GM12878 (cell line): ENCODE measurements at regions of chr16 and their contacts with region 1.

Region 1: GRCh38 chr16:50065624-50066481 is at the start of gene HEATR3:
- DNase-seq: peak; percentile 82
- ATAC-seq: peak; percentile 93
- H3K4me3 ChIP-seq: peak within 1 kb of the TSS; percentile 99
- H3K27ac ChIP-seq: peak within 1 kb of the TSS; percentile 86
- H3K4me1 ChIP-seq: peaks cover 15% of the 10 kb centered on the region
- H3K27me3 ChIP-seq: no peaks in the 10 kb centered on the region
- CTCF ChIP-seq: no peak
- EP300 ChIP-seq: no peak
- POLR2A ChIP-seq: peak; percentile 89
- RAD21 ChIP-seq: no peak
- polyA plus RNA-seq, gene HEATR3: 1.5 to 5.0 TPM

Region 2: DNA sequence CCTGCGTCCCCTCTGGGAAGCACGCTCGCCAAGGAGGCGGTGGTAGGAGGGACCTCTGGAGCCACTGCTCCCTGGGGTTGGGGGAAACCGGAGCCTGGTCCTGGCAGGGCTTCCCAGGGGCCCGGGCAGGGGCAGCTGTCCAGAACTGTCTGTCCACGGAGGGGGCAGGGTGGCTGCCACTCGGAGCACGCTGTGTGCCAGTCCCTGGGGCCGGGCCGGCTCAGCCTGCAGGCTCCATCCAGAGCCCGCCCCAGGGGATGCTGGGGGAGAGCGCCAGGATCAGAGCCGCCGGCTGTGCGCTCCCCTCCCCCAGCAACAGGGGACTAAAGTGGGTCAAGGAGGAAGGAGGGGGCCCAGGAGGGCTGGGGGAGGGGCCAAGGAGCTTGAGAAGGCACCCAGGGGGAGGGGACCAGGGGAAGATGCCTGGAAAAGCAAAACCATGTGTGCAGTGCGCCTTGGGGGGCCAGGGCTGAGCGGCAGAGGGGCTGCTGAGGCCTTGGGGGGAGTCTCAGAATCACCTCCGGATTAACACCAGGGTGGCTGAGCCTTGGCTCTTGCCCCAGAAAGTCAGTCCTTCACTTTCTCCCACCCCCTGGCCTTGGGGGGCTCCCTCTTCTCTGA is 231.2 kb before region 1 on chr16:
- CTCF ChIA-PET with region 1: no interaction called
- POLR2A ChIA-PET with region 1: no interaction called
- RAD21 ChIA-PET with region 1: no interaction called
- SMC1A ChIA-PET with region 1: no interaction called
- in situ Hi-C with region 1: no loop called
- intact Hi-C with region 1: no loop called
- DNase-seq: no peak
- ATAC-seq: no peak
- H3K4me3 ChIP-seq: no peak overlapping the region
- H3K27ac ChIP-seq: no peak overlapping the region
- H3K4me1 ChIP-seq: no peaks in the 10 kb centered on the region
- H3K27me3 ChIP-seq: peaks cover 9 to 16% of the 10 kb centered on the region in 2 experiments
- CTCF ChIP-seq: no peak
- EP300 ChIP-seq: no peak
- POLR2A ChIP-seq: no peak
- RAD21 ChIP-seq: no peak

Region 3: DNA sequence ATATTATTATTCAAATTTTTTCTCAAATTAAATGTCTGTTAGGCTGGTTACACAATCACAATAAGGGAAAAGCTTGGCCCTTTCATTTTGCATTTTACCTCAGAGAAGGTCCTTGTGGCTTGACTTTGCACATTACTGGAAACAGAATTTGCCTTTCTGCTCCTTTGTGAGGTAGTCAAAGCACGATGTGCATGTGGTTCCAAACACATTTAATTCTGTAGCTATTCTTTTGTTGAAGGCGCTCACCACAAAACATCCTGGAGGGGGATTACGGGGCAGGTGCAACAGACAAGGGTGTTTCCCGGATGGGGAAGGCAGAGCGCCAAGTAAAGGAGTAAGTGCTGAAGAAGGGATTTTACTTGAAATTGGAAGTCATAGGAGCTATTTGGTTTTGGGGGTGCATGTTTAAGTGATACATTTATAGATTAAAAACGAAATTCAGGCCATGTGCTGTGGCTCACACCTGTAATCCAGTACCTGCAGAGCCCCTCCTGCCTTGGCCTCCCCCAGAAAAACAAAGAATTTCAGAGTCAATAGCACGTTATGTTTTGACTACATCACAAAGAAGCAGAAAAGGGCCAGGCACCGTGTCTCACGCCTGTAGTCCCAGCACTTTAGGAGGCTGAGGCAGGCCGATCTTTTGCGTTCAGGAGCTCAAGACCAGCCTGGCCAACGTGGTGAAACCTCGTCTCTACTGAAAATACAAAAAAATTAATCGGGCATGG is 56.0 kb after region 1 on chr16:
- CTCF ChIA-PET with region 1: interaction called, 22 read pairs
- POLR2A ChIA-PET with region 1: interaction called, 4 read pairs
- RAD21 ChIA-PET with region 1: interaction called, 25 read pairs
- SMC1A ChIA-PET with region 1: interaction called, 13 read pairs
- in situ Hi-C with region 1: no loop called
- intact Hi-C with region 1: loop called (anchors 2 kb)
- DNase-seq: peak; percentile 72
- ATAC-seq: peak; percentile 82
- H3K4me3 ChIP-seq: peak overlapping the region; percentile 16; the same call in 1 of the 2 replicates
- H3K27ac ChIP-seq: peak overlapping the region; percentile 75
- H3K4me1 ChIP-seq: peaks cover 32% of the 10 kb centered on the region
- H3K27me3 ChIP-seq: no peaks in the 10 kb centered on the region
- CTCF ChIP-seq: no peak
- EP300 ChIP-seq: peak; percentile 56 to 85; a peak in 3 of 4 replicates
- POLR2A ChIP-seq: no peak
- RAD21 ChIP-seq: no peak

Region 4: DNA sequence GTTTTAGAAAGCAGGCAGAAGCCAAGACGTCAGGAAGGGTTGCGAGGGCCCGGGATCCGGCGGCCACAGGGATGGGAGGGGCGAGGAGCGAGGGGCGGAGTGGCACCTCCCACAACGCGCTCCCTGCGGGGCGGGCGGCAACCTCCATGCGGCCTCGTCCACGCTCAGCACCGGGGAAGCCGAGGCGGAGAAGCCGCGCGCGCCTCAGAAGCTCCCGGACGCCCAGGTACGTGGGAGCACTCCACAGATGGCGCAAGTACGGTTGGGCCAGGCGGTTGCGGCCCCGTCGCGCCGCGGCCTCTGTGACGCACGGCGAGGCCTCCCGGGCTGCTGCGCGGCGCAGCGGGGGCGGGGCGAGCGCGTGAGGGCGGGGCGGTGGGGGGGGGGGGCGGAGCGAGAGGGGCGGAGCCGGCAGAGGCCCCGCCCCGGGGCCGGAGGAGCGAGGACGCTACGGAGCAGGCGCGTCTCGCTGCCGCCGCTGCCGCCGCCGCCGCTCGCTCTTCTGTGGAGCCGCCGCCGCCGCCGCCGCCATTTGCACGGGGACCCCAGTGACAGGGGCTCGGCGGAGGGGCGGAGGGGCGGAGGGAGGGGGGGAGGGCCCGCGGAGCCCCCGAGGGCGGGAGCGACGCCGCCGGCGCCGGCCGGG is 87.1 kb after region 1 on chr16 and contains the start of gene TENT4B:
- CTCF ChIA-PET with region 1: interaction called, 12 read pairs
- POLR2A ChIA-PET with region 1: interaction called, 5 read pairs
- RAD21 ChIA-PET with region 1: interaction called, 5 read pairs
- SMC1A ChIA-PET with region 1: interaction called, 8 read pairs
- in situ Hi-C with region 1: no loop called
- intact Hi-C with region 1: loop called (anchors 2 kb)
- DNase-seq: peak; percentile 57
- ATAC-seq: peak; percentile 78
- H3K4me3 ChIP-seq: peak within 1 kb of the TSS; percentile 87
- H3K27ac ChIP-seq: peak within 1 kb of the TSS; percentile 96
- H3K4me1 ChIP-seq: peaks cover 6% of the 10 kb centered on the region
- H3K27me3 ChIP-seq: no peaks in the 10 kb centered on the region
- CTCF ChIP-seq: no peak
- EP300 ChIP-seq: no peak
- POLR2A ChIP-seq: peak; percentile 94
- RAD21 ChIP-seq: no peak
- polyA plus RNA-seq, gene TENT4B: 11.7 to 16.7 TPM

Region 5: DNA sequence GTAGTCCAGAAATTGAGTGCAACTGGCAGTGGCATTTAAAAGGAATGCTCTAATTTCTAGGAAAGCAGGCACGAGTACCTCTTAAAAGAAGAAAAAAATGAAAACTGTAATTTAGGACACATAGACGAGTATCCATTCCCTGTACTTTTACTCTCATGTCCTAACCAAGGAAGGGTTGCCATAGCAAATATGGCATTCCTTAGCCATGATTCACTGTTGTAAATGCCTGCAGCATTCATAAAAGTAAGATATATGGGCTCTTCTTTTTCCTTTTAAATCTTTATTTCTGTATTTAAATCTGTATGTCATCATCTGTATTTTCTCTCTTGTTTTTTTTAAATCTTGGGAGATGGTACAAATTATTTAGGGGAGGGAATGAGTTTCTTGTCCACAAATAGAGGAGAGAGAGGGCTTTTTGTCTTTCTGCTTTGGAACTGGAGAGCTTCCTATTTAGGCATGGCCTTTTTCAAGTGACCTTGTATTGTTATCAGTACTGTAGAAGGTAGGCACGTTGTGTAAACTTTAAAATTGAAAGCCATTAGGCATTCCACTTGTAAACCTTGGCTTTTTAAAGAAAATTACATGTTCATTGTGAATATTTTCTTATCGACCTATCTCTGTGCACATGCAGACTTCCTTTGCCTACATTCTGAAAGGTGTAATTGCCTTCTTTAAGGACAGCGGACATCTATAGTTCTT is 137.2 kb after region 1 on chr16:
- CTCF ChIA-PET with region 1: interaction called, 422 read pairs
- POLR2A ChIA-PET with region 1: interaction called, 3 read pairs
- RAD21 ChIA-PET with region 1: interaction called, 309 read pairs
- SMC1A ChIA-PET with region 1: interaction called, 263 read pairs
- in situ Hi-C with region 1: loop called (anchors 5 kb)
- intact Hi-C with region 1: no loop called
- DNase-seq: no peak
- ATAC-seq: no peak
- H3K4me3 ChIP-seq: no peak overlapping the region
- H3K27ac ChIP-seq: no peak overlapping the region
- H3K4me1 ChIP-seq: peaks cover 19% of the 10 kb centered on the region
- H3K27me3 ChIP-seq: no peaks in the 10 kb centered on the region
- CTCF ChIP-seq: no peak
- EP300 ChIP-seq: no peak
- POLR2A ChIP-seq: no peak
- RAD21 ChIP-seq: no peak